ENCODE measurements at regions of chr3 and their contacts with region 1.

Region 1: GRCh38 chr3:42581709-42582473 is at the start of gene SEC22C:
- DNase-seq: peak; percentile 90 to 97 (median 94)
- ATAC-seq: peak; percentile 89
- H3K4me3 ChIP-seq: peak within 1 kb of the TSS; percentile 76
- H3K4me3 Mint-ChIP-seq: peak within 1 kb of the TSS; percentile 93
- H3K27ac ChIP-seq: peak within 1 kb of the TSS; percentile 92 to 98
- H3K27ac Mint-ChIP-seq: peak within 1 kb of the TSS; percentile 98
- H3K4me1 ChIP-seq: peaks cover 17% of the 10 kb centered on the region
- H3K4me1 Mint-ChIP-seq: peaks cover 48% of the 10 kb centered on the region
- H3K27me3 ChIP-seq: no peaks in the 10 kb centered on the region
- H3K27me3 Mint-ChIP-seq: no peaks in the 10 kb centered on the region
- CTCF ChIP-seq: peak; percentile 44
- total RNA-seq, gene SEC22C: 73.6 to 75.4 TPM

Region 2: DNA sequence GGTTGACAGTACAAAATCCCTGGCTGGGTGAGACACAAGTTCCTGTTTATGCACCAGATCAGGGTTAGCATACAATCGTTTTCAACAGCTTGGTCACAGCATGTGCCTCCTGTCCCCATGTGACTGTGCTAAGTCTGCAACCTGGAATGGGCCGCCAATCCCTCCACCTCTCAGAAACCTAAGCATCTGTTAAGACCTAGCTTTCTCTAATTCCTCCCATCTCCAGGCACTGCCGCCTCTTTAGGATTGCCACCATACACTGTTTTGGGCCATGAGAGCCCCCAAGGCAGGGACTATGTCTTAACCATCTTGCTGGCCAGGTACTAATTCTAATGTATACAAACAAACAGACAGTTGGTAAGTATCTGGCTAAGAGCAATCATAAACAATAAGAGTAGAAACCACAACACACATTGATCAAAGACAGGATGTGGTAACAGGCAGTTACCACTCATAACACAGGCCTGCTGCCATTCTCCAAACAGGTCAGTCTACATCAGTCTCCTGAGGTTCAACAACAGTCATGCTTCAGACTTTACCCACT is 25.7 kb before region 1 on chr3:
- CTCF ChIA-PET with region 1: no interaction called
- POLR2A ChIA-PET with region 1: interaction called, 3 read pairs
- intact Hi-C with region 1: loop called (anchors 1 to 2 kb)
- DNase-seq: peak; percentile 31 to 87 (median 46)
- ATAC-seq: peak; percentile 86
- H3K4me3 ChIP-seq: no peak overlapping the region
- H3K4me3 Mint-ChIP-seq: peak overlapping the region; percentile 54
- H3K27ac ChIP-seq: peak overlapping the region; percentile 58 to 73
- H3K27ac Mint-ChIP-seq: peak overlapping the region; percentile 92
- H3K4me1 ChIP-seq: peaks cover 41% of the 10 kb centered on the region
- H3K4me1 Mint-ChIP-seq: peaks cover 47% of the 10 kb centered on the region
- H3K27me3 ChIP-seq: no peaks in the 10 kb centered on the region
- H3K27me3 Mint-ChIP-seq: no peaks in the 10 kb centered on the region
- CTCF ChIP-seq: no peak

Region 3: DNA sequence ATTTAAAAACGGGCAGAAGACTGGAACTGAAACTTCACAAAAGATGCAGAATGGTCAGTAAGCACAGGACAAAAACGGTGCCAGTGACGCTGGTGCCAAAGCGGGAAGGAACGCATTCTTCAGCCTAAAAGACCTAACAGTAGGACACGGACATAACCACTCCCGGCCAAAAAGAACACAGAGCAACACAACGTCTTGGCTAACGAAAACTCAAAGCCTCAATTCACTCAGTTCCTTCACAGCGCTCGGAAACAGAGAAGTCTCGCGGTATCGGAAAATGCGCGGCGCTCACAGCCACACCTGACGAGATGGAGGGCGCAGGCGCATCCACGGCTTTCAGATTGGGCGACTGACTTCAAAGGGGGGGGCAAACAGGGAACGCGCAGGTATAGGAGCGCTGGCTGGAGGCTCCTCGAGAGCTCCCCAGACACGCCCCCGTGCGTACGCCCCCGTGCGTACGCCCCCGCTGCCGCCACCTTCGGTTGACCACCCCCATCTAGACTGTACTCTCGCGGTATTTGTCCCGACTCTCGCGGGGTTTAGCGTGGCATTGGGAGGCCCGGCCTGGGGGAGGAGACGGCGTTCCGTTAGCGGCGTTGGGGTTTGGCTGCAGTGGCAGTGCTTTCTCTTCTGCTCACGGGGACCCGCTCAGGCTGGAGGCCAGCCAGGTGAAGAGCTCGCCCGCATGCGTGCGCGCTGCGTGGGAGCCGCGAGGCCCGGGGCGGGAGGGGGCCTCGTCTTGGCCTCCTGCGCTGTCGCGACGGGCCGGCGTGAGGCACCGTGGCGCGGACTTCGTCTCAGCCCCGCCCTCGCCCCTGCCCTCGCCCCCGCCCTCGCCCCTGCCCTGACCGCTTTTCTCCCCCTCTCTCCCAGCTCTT is 18.5 kb after region 1 on chr3 and contains the start of gene NKTR:
- CTCF ChIA-PET with region 1: interaction called, 26 read pairs
- POLR2A ChIA-PET with region 1: interaction called, 36 read pairs
- intact Hi-C with region 1: loop called in 1 of 2 experiments (anchors 1 kb)
- DNase-seq: peak; percentile 99 to 100 (median 99)
- ATAC-seq: peak; percentile 93
- H3K4me3 ChIP-seq: peak within 1 kb of the TSS; percentile 95
- H3K4me3 Mint-ChIP-seq: peak within 1 kb of the TSS; percentile 98
- H3K27ac ChIP-seq: peak within 1 kb of the TSS; percentile 63 to 72
- H3K27ac Mint-ChIP-seq: peak within 1 kb of the TSS; percentile 99
- H3K4me1 ChIP-seq: peaks cover 22% of the 10 kb centered on the region
- H3K4me1 Mint-ChIP-seq: peaks cover 40% of the 10 kb centered on the region
- H3K27me3 ChIP-seq: no peaks in the 10 kb centered on the region
- H3K27me3 Mint-ChIP-seq: no peaks in the 10 kb centered on the region
- CTCF ChIP-seq: no peak
- total RNA-seq, gene NKTR: 236 to 249 TPM

Region 4: DNA sequence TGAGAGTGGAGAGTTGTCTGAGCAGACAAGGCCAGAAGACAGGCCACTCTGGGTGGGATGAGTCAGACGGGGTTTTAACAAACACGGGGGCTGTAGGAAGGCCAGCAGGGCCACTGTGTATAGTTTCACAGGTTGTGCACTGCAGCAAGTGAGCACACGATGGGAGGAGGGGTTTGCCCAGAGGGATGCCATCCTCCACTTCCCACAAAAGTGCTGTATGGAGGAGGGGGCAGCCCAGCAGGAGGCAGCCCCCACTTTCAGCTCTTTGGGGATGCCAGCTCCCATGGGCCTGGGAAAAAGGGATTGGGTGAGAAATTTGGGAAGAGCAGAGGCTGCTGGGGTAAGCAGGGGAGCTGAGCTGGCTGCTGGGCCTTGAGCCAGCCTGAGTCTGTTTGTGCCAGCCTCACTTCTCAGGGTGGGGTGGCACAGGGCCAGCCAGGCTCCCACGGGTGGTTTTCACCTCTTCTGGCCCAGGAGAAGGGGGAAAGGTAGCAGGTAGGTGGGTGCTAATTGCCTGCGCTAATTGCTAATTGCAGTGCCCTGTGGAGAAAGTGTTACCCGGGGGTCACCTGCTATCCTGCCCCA is 78.3 kb after region 1 on chr3:
- CTCF ChIA-PET with region 1: no interaction called
- POLR2A ChIA-PET with region 1: no interaction called
- intact Hi-C with region 1: no loop called
- DNase-seq: no peak
- ATAC-seq: no peak
- H3K4me3 ChIP-seq: no peak overlapping the region
- H3K4me3 Mint-ChIP-seq: no peak overlapping the region
- H3K27ac ChIP-seq: no peak overlapping the region
- H3K27ac Mint-ChIP-seq: no peak overlapping the region
- H3K4me1 ChIP-seq: peaks cover 4% of the 10 kb centered on the region
- H3K4me1 Mint-ChIP-seq: peaks cover 2% of the 10 kb centered on the region
- H3K27me3 ChIP-seq: no peaks in the 10 kb centered on the region
- H3K27me3 Mint-ChIP-seq: no peaks in the 10 kb centered on the region
- CTCF ChIP-seq: no peak

Region 5: GRCh38 chr3:42739401-42740158 is 157.7 kb after region 1 on chr3:
- CTCF ChIA-PET with region 1: interaction called, 10 read pairs
- POLR2A ChIA-PET with region 1: no interaction called
- intact Hi-C with region 1: no loop called
- DNase-seq: peak in 1 of 14 experiments; percentile 6
- ATAC-seq: no peak
- H3K4me3 ChIP-seq: no peak overlapping the region
- H3K4me3 Mint-ChIP-seq: no peak overlapping the region
- H3K27ac ChIP-seq: no peak overlapping the region
- H3K27ac Mint-ChIP-seq: no peak overlapping the region
- H3K4me1 ChIP-seq: peaks cover 6% of the 10 kb centered on the region
- H3K4me1 Mint-ChIP-seq: peaks cover 11% of the 10 kb centered on the region
- H3K27me3 ChIP-seq: no peaks in the 10 kb centered on the region
- H3K27me3 Mint-ChIP-seq: no peaks in the 10 kb centered on the region
- CTCF ChIP-seq: no peak

Region 6: GRCh38 chr3:42880601-42881451 is 298.9 kb after region 1 on chr3:
- CTCF ChIA-PET with region 1: no interaction called
- POLR2A ChIA-PET with region 1: no interaction called
- intact Hi-C with region 1: loop called in 1 of 2 experiments (anchors 10 kb)
- DNase-seq: peak; percentile 73 to 94 (median 84)
- ATAC-seq: peak; percentile 98
- H3K4me3 ChIP-seq: peak overlapping the region; percentile 78
- H3K4me3 Mint-ChIP-seq: peak overlapping the region; percentile 78
- H3K27ac ChIP-seq: peak overlapping the region; percentile 13 to 46
- H3K27ac Mint-ChIP-seq: peak overlapping the region; percentile 69
- H3K4me1 ChIP-seq: peaks cover 15% of the 10 kb centered on the region
- H3K4me1 Mint-ChIP-seq: peaks cover 17% of the 10 kb centered on the region
- H3K27me3 ChIP-seq: peaks cover 0 to 6% of the 10 kb centered on the region in 2 experiments
- H3K27me3 Mint-ChIP-seq: no peaks in the 10 kb centered on the region
- CTCF ChIP-seq: peak; percentile 89

Region 7: GRCh38 chr3:42946050-42946449 is 364.2 kb after region 1 on chr3:
- CTCF ChIA-PET with region 1: no interaction called
- POLR2A ChIA-PET with region 1: no interaction called
- intact Hi-C with region 1: no loop called
- DNase-seq: no peak
- ATAC-seq: no peak
- H3K4me3 ChIP-seq: no peak overlapping the region
- H3K4me3 Mint-ChIP-seq: no peak overlapping the region
- H3K27ac ChIP-seq: no peak overlapping the region
- H3K27ac Mint-ChIP-seq: no peak overlapping the region
- H3K4me1 ChIP-seq: no peaks in the 10 kb centered on the region
- H3K4me1 Mint-ChIP-seq: no peaks in the 10 kb centered on the region
- H3K27me3 ChIP-seq: no peaks in the 10 kb centered on the region
- H3K27me3 Mint-ChIP-seq: no peaks in the 10 kb centered on the region
- CTCF ChIP-seq: no peak

Measured in CD4-positive, alpha-beta T cell (primary cell).